ENCODE measurements at regions of chr11 and their contacts with region 1.

Region 1: DNA sequence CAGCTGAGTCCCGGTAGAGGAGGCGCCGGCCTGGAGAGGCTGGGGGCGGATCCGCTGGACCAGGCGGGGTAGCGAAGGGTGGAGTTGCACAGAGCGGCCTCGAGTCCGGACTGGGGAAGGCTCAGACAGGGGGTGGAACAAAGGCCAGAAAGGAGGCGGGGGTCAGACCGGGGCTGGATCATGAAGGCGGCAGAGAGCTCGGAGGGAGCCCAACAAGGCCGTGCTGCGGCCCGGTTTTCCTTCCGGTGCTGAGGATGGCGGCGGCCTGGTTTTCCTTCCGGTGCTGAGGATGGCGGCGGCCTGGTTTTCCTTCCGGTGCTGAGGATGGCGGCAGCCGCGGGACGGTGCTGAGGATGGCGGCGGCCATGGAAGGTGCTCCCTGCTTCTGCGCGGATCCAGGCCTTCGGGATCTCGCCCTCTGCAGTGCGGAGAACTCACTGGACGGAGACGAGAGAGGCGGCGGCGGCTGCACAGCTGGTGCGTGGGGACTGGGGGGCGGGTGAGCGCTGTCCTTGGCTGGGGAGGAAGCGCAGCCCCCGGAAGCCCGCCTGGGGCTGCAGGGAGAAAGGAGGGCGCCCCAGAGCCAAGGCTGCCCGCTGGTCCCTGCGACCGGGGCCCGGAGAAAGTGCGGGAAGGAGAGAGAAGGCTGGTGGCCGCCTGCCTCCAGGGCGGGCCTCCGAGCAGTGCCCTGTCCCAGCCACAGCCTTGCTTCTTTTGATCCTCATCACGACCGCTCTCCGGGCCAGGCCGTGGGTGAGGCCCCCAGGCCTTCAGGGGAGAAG is 350.4 kb upstream of the B3GAT1 start:
- DNase-seq: no peak
- ATAC-seq: no peak; the same call in 2 of the 3 replicates
- H3K4me3 ChIP-seq: no peak overlapping the region
- H3K27ac ChIP-seq: no peak overlapping the region
- H3K4me1 ChIP-seq: no peaks in the 10 kb centered on the region
- H3K27me3 ChIP-seq: peaks cover 0 to 8% of the 10 kb centered on the region in 2 experiments; a peak in 2 of 5 replicates
- CTCF ChIP-seq: no peak
- EP300 ChIP-seq: no peak
- POLR2A ChIP-seq: no peak
- RAD21 ChIP-seq: no peak

Region 2: DNA sequence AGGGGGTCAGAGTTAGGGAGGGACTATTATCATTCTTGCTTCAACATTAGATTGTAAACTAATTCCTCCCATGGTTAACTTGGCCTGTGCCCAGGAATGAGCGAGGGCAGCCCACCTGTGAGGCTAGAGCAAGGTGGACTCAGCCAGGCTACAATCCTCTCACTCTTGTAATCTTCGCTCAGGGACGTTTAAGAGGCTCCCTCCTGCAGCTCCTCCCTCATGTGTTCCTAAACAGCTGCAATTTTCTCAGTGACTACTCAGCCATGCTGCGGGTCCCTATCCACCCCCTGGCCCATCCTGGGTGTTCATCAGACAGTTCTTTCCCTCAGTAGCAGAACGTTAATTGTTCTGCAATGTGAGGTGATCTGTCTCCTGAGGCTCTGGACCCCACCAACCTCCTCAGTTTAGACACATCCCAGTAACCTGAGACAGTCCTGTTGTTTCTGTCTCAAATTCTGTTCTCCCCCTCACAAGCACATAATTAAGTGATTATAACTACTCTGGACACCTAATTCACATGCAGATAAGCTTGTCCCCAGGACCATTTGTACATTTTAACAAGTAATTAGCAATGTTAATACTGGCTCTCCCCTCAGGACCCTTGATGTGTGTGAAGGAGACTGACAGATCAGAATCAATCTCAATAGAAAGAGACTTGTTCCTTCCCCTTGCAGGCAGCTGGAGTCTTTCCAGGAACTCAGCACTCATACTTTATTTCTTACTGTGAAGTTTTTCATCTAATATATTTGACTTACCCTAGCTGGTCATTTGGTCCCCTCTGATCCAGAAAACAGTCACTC is 13.2 kb before region 1 on chr11:
- CTCF ChIA-PET with region 1: no interaction called
- POLR2A ChIA-PET with region 1: no interaction called
- in situ Hi-C with region 1: no loop called
- intact Hi-C with region 1: loop called (anchors 1 kb)
- DNase-seq: no peak
- ATAC-seq: no peak
- H3K4me3 ChIP-seq: no peak overlapping the region
- H3K27ac ChIP-seq: no peak overlapping the region
- H3K4me1 ChIP-seq: peaks cover 35% of the 10 kb centered on the region
- H3K27me3 ChIP-seq: peaks cover 1 to 25% of the 10 kb centered on the region in 2 experiments; a peak in 4 of 5 replicates
- CTCF ChIP-seq: no peak
- EP300 ChIP-seq: no peak
- POLR2A ChIP-seq: no peak
- RAD21 ChIP-seq: no peak

Region 3: GRCh38 chr11:134821422-134821821 is 59.0 kb after region 1 on chr11:
- CTCF ChIA-PET with region 1: no interaction called
- POLR2A ChIA-PET with region 1: no interaction called
- in situ Hi-C with region 1: loop called (anchors 10 kb)
- intact Hi-C with region 1: no loop called
- DNase-seq: no peak
- ATAC-seq: no peak
- H3K4me3 ChIP-seq: no peak overlapping the region
- H3K27ac ChIP-seq: no peak overlapping the region
- H3K4me1 ChIP-seq: no peaks in the 10 kb centered on the region
- H3K27me3 ChIP-seq: peaks cover 0 to 2% of the 10 kb centered on the region in 2 experiments; a peak in 2 of 5 replicates
- CTCF ChIP-seq: no peak
- EP300 ChIP-seq: no peak
- POLR2A ChIP-seq: no peak
- RAD21 ChIP-seq: no peak